ENCODE measurements at regions of chr12 and their contacts with region 1.

Region 1: GRCh38 chr12:751192-751998 is 984 bp upstream of the WNK1 start:
- DNase-seq: peak; percentile 99
- H3K4me3 ChIP-seq: peak overlapping the region; percentile 87
- H3K27ac ChIP-seq: peak overlapping the region; percentile 90
- H3K4me1 ChIP-seq: peaks cover 39% of the 10 kb centered on the region
- CTCF ChIP-seq: peak; percentile 88

Region 2: GRCh38 chr12:642633-643474 is 108.5 kb before region 1 on chr12:
- CTCF ChIA-PET with region 1: interaction called, 5 read pairs
- POLR2A ChIA-PET with region 1: interaction called, 4 read pairs
- intact Hi-C with region 1: loop called (anchors 1 kb)
- DNase-seq: peak; percentile 87
- H3K4me3 ChIP-seq: peak overlapping the region; percentile 71
- H3K27ac ChIP-seq: peak overlapping the region; percentile 69
- H3K4me1 ChIP-seq: peaks cover 41% of the 10 kb centered on the region
- CTCF ChIP-seq: peak; percentile 46

Region 3: GRCh38 chr12:685388-685787 is 66.0 kb before region 1 on chr12:
- CTCF ChIA-PET with region 1: no interaction called
- POLR2A ChIA-PET with region 1: interaction called, 18 read pairs
- intact Hi-C with region 1: no loop called
- DNase-seq: peak; percentile 84
- H3K4me3 ChIP-seq: peak overlapping the region; percentile 24
- H3K27ac ChIP-seq: peak overlapping the region; percentile 76
- H3K4me1 ChIP-seq: peaks cover 40% of the 10 kb centered on the region
- CTCF ChIP-seq: no peak

Region 4: DNA sequence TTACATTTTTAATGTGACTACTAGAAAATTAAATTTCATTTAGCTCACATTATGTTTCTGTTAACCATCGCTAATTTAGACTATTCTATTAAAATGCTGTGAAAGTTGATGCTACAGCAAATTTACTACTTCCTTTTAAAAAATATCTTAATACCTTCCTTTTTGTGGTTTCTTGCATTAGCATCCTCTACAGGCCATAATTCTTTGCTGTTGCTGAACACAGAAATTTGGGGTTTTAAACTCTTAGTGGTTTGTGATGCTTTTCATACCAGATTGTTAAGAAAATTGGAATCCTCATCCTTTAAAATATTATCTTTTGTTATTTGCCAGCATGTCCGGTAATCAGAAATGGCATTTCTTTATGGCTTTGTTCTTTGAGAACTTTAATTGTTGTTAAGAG is 19.1 kb after region 1 on chr12:
- CTCF ChIA-PET with region 1: no interaction called
- POLR2A ChIA-PET with region 1: interaction called, 4 read pairs
- intact Hi-C with region 1: loop called (anchors 1 kb)
- DNase-seq: no peak
- H3K4me3 ChIP-seq: no peak overlapping the region
- H3K27ac ChIP-seq: no peak overlapping the region
- H3K4me1 ChIP-seq: peaks cover 35% of the 10 kb centered on the region
- CTCF ChIP-seq: no peak

Region 5: DNA sequence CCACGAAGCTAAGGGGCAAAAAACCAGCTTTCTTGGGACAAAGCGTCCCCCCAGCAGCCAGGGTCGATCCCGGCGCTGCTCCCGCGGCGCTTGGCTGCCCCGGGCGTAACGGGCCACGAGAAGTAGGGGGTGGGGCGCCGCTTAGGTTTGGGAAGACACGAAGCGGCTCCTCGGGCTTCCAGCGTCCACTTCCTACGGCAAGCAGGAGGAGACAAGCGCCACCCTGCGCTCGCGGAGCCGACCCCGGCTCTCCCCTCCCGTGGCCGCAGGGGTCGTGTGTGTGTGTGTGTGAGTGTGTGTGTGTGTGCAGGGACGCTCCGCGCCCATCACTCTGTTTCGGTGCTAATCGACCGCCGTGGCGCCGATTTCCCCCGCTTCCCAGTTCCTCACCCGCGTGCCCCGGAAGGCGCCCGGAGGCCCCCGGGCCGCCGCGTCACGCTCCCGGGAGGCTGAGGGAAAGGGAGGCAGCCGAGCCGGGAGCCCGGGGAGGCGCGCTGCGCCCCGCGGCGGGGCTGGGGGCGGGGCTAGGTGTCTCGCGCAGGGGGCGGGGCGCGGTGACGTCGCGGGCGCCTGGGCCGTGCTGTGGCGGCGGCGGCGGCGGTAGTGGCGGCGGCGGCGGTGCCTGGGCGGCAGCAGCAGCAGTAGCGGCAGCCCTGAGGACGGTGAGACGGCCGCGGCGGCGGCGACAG is 239.4 kb after region 1 on chr12 and contains the start of gene ERC1:
- CTCF ChIA-PET with region 1: no interaction called
- POLR2A ChIA-PET with region 1: no interaction called
- intact Hi-C with region 1: loop called (anchors 2 kb)
- DNase-seq: peak; percentile 88
- H3K4me3 ChIP-seq: peak within 1 kb of the TSS; percentile 87
- H3K27ac ChIP-seq: peak within 1 kb of the TSS; percentile 66
- H3K4me1 ChIP-seq: peaks cover 38% of the 10 kb centered on the region
- CTCF ChIP-seq: peak; percentile 44
- total RNA-seq, gene ERC1: 26.9 and 37.0 TPM in 2 replicates

Measured in OCI-LY7 (cell line).